Thyroid gland (tissue), 4 donors: ENCODE measurements at regions of chr17 and their contacts with region 1.

Region 1: DNA sequence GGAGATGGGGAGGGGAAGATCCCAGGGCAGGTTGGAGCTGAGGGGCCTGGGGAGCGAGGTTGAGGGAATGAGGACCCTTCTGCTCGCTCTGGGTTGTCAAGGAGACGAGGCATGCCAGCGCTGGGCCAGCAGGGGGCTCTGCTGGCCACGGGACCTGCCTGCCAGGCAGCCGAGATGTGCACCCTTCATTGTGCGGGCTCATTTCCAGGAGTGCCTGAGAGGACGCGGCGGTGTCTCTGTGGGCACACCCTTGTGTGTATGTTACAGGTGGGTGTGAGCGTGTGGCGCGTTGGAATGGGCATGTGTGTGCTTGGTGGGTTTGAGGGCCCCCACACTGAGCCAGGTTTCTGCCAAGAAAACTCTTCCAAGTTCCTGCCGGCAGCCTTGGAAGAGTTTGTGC is 15.9 kb downstream of the ARHGAP23 start:
- DNase-seq: peak; percentile 69 to 72
- H3K4me3 ChIP-seq: no peak overlapping the region
- H3K27ac ChIP-seq: no peak overlapping the region
- H3K4me1 ChIP-seq: peaks cover 0 to 6% of the 10 kb centered on the region in 2 donors
- H3K27me3 ChIP-seq: no peaks in the 10 kb centered on the region
- CTCF ChIP-seq: peak; percentile 57 to 89 (median 82)
- POLR2A ChIP-seq: no peak

Region 2: DNA sequence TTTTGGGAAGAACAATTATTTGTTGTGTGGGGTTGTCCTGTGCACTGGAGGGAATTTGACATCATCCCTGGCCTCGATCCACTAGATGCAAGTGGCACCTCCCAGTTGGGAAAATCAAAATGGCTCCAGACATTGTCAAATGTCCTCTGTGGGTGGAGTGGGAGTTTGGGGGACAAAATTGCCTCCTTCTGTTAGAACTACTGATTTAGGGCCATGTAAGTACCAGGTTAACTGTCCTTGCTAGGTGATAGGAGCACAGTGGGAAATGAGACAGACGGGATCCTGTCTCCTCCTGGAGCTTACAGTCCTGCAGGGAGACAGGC is 41.0 kb after region 1 on chr17:
- intact Hi-C with region 1: loop called (anchors 5 kb)
- DNase-seq: no peak
- H3K4me3 ChIP-seq: no peak overlapping the region
- H3K27ac ChIP-seq: no peak overlapping the region
- H3K4me1 ChIP-seq: peaks cover 0 to 3% of the 10 kb centered on the region in 2 donors
- H3K27me3 ChIP-seq: no peaks in the 10 kb centered on the region
- CTCF ChIP-seq: no peak
- POLR2A ChIP-seq: no peak

Region 3: GRCh38 chr17:38511081-38511728 is 67.1 kb after region 1 on chr17:
- intact Hi-C with region 1: no loop called
- DNase-seq: no peak
- H3K4me3 ChIP-seq: no peak overlapping the region
- H3K27ac ChIP-seq: no peak overlapping the region
- H3K4me1 ChIP-seq: peaks cover 4 to 14% of the 10 kb centered on the region in 2 donors
- H3K27me3 ChIP-seq: no peaks in the 10 kb centered on the region
- CTCF ChIP-seq: no peak
- POLR2A ChIP-seq: no peak